ENCODE measurements at regions of chr19 and their contacts with region 1.

Region 1: GRCh38 chr19:41872775-41873647 is 4.1 kb upstream of the CD79A start:
- DNase-seq: peak; percentile 89
- H3K4me3 ChIP-seq: no peak overlapping the region
- H3K27ac ChIP-seq: no peak overlapping the region
- H3K4me1 ChIP-seq: peaks cover 5% of the 10 kb centered on the region
- H3K27me3 ChIP-seq: no peaks in the 10 kb centered on the region
- CTCF ChIP-seq: peak; percentile 82

Region 2: GRCh38 chr19:41844601-41845000 is 28.4 kb before region 1 on chr19 and contains the start of gene LYPD4:
- intact Hi-C with region 1: no loop called
- DNase-seq: no peak
- H3K4me3 ChIP-seq: no peak within 1 kb of the TSS
- H3K27ac ChIP-seq: no peak within 1 kb of the TSS
- H3K4me1 ChIP-seq: no peaks in the 10 kb centered on the region
- H3K27me3 ChIP-seq: no peaks in the 10 kb centered on the region
- CTCF ChIP-seq: no peak
- total RNA-seq, gene LYPD4: not detected

Region 3: GRCh38 chr19:41934849-41935374 is 61.9 kb after region 1 on chr19:
- intact Hi-C with region 1: loop called (anchors 1 kb)
- DNase-seq: peak; percentile 85
- H3K4me3 ChIP-seq: no peak overlapping the region
- H3K27ac ChIP-seq: no peak overlapping the region
- H3K4me1 ChIP-seq: no peaks in the 10 kb centered on the region
- H3K27me3 ChIP-seq: peaks cover 8% of the 10 kb centered on the region
- CTCF ChIP-seq: peak; percentile 85

Region 4: DNA sequence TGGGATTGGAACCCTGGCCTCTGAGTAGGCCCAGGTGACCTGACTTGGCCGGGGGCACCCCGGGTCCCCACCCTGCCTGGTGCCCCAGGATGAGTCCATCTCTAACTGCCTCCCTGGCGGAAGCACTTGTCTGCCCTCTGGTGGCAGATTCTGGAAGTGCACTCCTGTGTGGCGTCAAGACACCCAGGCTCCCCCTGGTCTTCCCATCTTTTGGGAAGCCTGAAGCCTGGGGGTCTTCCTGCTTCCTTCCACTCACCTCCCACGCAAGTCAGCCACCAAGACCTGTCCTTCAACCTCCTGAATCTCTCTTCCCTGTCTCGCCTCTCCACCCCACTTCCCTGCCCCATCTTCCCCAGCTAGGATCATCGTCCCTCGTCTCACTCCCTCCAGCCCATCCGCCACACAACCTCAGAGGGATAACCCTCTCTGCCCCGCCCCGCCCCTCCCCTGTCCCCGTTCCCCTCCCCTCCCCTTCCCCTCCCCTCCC is 78.7 kb after region 1 on chr19:
- intact Hi-C with region 1: loop called (anchors 5 kb)
- DNase-seq: peak; percentile 91
- H3K4me3 ChIP-seq: no peak overlapping the region
- H3K27ac ChIP-seq: no peak overlapping the region
- H3K4me1 ChIP-seq: no peaks in the 10 kb centered on the region
- H3K27me3 ChIP-seq: no peaks in the 10 kb centered on the region
- CTCF ChIP-seq: peak; percentile 99

Region 5: GRCh38 chr19:42023121-42023942 is 150.3 kb after region 1 on chr19:
- intact Hi-C with region 1: no loop called
- DNase-seq: peak; percentile 23
- H3K4me3 ChIP-seq: no peak overlapping the region
- H3K27ac ChIP-seq: no peak overlapping the region
- H3K4me1 ChIP-seq: no peaks in the 10 kb centered on the region
- H3K27me3 ChIP-seq: no peaks in the 10 kb centered on the region
- CTCF ChIP-seq: no peak

Measured in colonic mucosa (tissue), 4 donors.